GM12878 (cell line): ENCODE measurements at regions of chr2 and their contacts with region 1.

Region 1: GRCh38 chr2:13522917-13523821 is 806.4 kb downstream of the TRIB2 start:
- DNase-seq: peak; percentile 88
- ATAC-seq: peak; percentile 92
- H3K4me3 ChIP-seq: peak overlapping the region; percentile 45; the same call in 1 of the 2 replicates
- H3K27ac ChIP-seq: peak overlapping the region; percentile 97
- H3K4me1 ChIP-seq: peaks cover 11% of the 10 kb centered on the region; the same call in 1 of the 2 replicates
- H3K27me3 ChIP-seq: no peaks in the 10 kb centered on the region
- CTCF ChIP-seq: peak; percentile 29 to 36 (median 32); a peak in 5 of 6 replicates
- EP300 ChIP-seq: peak in 1 of 2 experiments; percentile 83; a peak in 2 of 4 replicates
- POLR2A ChIP-seq: no peak
- RAD21 ChIP-seq: peak; percentile 47; the same call in 1 of the 2 replicates

Region 2: DNA sequence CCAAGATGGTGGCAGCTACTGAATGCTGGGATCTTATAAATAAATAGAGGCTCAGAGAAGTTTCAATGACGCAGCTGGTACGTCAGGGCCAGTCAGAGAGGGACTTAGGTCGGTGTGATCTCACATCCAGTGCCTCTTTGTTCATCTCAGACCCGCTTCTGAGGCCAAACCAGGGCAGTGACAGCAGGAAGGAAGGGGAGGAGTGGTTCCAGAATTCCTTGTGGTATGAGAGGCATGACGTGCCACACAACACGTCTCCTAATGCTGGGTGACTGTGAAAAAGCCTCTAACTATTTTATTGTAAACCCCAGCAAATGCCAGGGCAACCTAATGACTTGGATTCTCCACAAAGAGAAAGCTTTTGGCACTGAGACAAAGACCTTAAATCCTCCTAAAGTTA is 1353.4 kb before region 1 on chr2:
- CTCF ChIA-PET with region 1: no interaction called
- POLR2A ChIA-PET with region 1: no interaction called
- RAD21 ChIA-PET with region 1: no interaction called
- SMC1A ChIA-PET with region 1: no interaction called
- in situ Hi-C with region 1: no loop called
- intact Hi-C with region 1: no loop called
- DNase-seq: no peak
- ATAC-seq: no peak
- H3K4me3 ChIP-seq: no peak overlapping the region
- H3K27ac ChIP-seq: no peak overlapping the region
- H3K4me1 ChIP-seq: no peaks in the 10 kb centered on the region
- H3K27me3 ChIP-seq: no peaks in the 10 kb centered on the region
- CTCF ChIP-seq: no peak
- EP300 ChIP-seq: no peak
- POLR2A ChIP-seq: no peak
- RAD21 ChIP-seq: no peak

Region 3: GRCh38 chr2:13193898-13194297 is 329.3 kb before region 1 on chr2:
- CTCF ChIA-PET with region 1: no interaction called
- POLR2A ChIA-PET with region 1: no interaction called
- RAD21 ChIA-PET with region 1: no interaction called
- SMC1A ChIA-PET with region 1: no interaction called
- in situ Hi-C with region 1: no loop called
- intact Hi-C with region 1: loop called (anchors 5 kb)
- DNase-seq: peak; percentile 31
- ATAC-seq: peak; percentile 92
- H3K4me3 ChIP-seq: no peak overlapping the region
- H3K27ac ChIP-seq: no peak overlapping the region
- H3K4me1 ChIP-seq: no peaks in the 10 kb centered on the region
- H3K27me3 ChIP-seq: no peaks in the 10 kb centered on the region
- CTCF ChIP-seq: peak; percentile 42 to 68 (median 56); a peak in 5 of 6 replicates
- EP300 ChIP-seq: no peak
- POLR2A ChIP-seq: no peak
- RAD21 ChIP-seq: peak; percentile 83

Region 4: GRCh38 chr2:13390676-13391075 is 132.5 kb before region 1 on chr2:
- CTCF ChIA-PET with region 1: no interaction called
- POLR2A ChIA-PET with region 1: no interaction called
- RAD21 ChIA-PET with region 1: no interaction called
- SMC1A ChIA-PET with region 1: no interaction called
- in situ Hi-C with region 1: no loop called
- intact Hi-C with region 1: no loop called
- DNase-seq: no peak
- ATAC-seq: no peak
- H3K4me3 ChIP-seq: no peak overlapping the region
- H3K27ac ChIP-seq: no peak overlapping the region
- H3K4me1 ChIP-seq: no peaks in the 10 kb centered on the region
- H3K27me3 ChIP-seq: no peaks in the 10 kb centered on the region
- CTCF ChIP-seq: no peak
- EP300 ChIP-seq: no peak
- POLR2A ChIP-seq: no peak
- RAD21 ChIP-seq: no peak

Region 5: DNA sequence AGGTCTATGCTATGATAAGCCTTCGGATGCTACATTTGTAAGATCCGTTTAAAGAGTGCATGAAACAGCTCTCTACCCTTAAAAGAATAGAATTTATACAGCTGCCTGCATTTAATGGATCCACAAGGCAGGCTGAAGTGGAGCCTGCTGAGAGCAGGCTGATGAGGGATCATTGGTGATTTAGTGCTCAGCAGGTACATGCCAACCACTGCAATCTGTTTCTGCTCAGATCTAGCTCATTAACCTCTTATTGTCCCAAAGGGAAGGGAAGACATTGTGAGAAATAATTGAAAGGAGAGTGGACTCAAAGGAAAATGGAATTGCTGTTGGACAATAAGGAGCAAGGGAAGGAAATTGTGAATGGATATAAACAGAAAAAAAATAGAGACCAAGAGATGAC is 16.1 kb after region 1 on chr2:
- CTCF ChIA-PET with region 1: no interaction called
- POLR2A ChIA-PET with region 1: no interaction called
- RAD21 ChIA-PET with region 1: interaction called, 4 read pairs
- SMC1A ChIA-PET with region 1: interaction called, 13 read pairs
- in situ Hi-C with region 1: no loop called
- intact Hi-C with region 1: no loop called
- DNase-seq: no peak
- ATAC-seq: no peak
- H3K4me3 ChIP-seq: no peak overlapping the region
- H3K27ac ChIP-seq: no peak overlapping the region
- H3K4me1 ChIP-seq: peaks cover 4% of the 10 kb centered on the region; the same call in 1 of the 2 replicates
- H3K27me3 ChIP-seq: no peaks in the 10 kb centered on the region
- CTCF ChIP-seq: no peak
- EP300 ChIP-seq: no peak
- POLR2A ChIP-seq: no peak
- RAD21 ChIP-seq: no peak

Region 6: DNA sequence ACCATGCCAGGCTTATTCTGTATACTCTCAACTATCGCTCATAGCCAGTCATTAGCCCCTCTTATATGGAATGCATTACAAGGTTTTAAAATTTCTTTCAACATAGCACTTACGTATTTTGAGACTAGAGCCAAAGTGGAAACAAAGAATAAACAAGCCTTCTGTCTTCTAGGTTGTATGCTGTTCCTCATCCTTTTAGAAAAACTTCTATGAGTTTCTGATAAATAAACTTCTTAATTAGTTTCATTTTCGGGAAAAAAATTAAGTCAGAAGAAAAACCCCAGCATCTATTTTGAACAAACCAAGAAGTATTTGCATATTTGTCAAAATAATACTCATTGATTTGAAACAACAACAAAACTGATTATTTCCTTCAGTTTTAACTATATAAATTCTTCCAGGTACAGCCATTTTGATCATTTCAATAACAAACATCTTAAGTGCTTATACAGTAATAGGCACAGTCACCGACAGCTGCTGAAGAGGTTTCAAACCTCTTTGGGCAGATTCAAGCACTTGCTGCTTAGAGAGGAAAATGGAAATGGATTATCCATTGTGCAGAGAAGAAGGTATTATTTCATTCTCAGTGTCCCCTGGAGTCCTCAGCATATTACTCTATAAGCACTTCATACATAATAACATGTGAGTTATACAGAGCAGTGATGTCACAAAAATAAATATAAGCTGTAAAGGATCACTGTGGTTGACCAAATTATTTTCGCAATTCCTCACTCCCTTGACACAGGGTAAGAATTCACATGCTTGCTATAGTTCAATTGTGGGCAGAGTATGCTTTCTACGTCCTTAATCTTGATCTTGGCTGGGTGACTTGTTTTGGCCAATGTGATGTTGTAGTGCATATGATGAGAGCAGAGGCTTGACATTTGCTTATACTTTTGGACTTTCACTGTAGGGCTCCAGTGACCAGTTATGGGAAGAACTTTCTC is 27.4 kb after region 1 on chr2:
- CTCF ChIA-PET with region 1: interaction called, 7 read pairs
- POLR2A ChIA-PET with region 1: interaction called, 5 read pairs
- RAD21 ChIA-PET with region 1: interaction called, 70 read pairs
- SMC1A ChIA-PET with region 1: interaction called, 46 read pairs
- in situ Hi-C with region 1: no loop called
- intact Hi-C with region 1: loop called (anchors 5 kb)
- DNase-seq: no peak
- ATAC-seq: peak; percentile 79
- H3K4me3 ChIP-seq: no peak overlapping the region
- H3K27ac ChIP-seq: no peak overlapping the region; the same call in 1 of the 2 replicates
- H3K4me1 ChIP-seq: 0 out of 2 replicates have a peak, but pooled peaks cover 4% of the 10 kb centered on the region
- H3K27me3 ChIP-seq: no peaks in the 10 kb centered on the region
- CTCF ChIP-seq: no peak
- EP300 ChIP-seq: peak; percentile 41 to 66; a peak in 3 of 4 replicates
- POLR2A ChIP-seq: no peak
- RAD21 ChIP-seq: no peak

Region 7: DNA sequence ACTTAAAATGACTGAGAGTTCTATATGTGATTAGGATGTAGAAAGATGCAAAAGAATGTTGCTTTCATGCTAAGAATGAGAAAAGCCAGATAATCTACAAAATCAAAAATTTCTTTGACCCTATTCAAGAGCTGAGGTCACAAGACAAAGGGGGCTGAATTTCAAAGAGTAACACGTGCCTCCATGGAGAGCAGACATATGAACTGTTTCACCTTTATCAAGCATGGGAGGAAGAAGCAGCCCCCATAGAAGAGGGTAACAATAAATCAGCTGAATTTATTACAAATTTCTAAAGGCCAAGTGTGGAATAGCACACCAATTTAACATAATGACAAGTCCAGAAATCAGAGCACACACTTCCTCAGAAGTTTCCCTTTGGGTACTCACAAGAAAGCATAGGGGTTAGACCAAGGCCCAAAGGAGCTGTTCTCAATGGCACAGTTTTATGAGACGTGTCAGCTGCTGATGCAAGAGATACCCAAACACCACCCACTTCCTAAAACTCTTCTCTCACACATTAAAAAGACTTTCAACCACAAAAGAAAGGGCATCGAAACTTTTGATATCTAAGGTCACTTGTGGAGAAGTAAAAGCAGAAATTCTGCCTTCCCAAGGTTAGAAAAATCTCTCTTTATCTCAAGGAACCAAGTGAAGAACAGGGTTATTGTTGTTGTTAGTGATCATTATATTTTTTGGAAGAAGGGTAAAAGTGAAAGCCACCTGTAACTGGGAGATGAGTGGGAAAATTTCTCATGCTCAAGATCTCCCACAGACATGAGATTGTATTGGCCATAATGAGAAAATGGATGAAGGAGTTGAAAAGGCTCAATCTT is 143.6 kb after region 1 on chr2:
- CTCF ChIA-PET with region 1: no interaction called
- POLR2A ChIA-PET with region 1: interaction called, 3 read pairs
- RAD21 ChIA-PET with region 1: interaction called, 11 read pairs
- SMC1A ChIA-PET with region 1: interaction called, 14 read pairs
- in situ Hi-C with region 1: no loop called
- intact Hi-C with region 1: no loop called
- DNase-seq: peak; percentile 76
- ATAC-seq: peak; percentile 98
- H3K4me3 ChIP-seq: no peak overlapping the region
- H3K27ac ChIP-seq: peak overlapping the region; percentile 79
- H3K4me1 ChIP-seq: peaks cover 5% of the 10 kb centered on the region; the same call in 1 of the 2 replicates
- H3K27me3 ChIP-seq: no peaks in the 10 kb centered on the region
- CTCF ChIP-seq: no peak
- EP300 ChIP-seq: peak; percentile 38 to 47; a peak in 2 of 4 replicates
- POLR2A ChIP-seq: no peak
- RAD21 ChIP-seq: no peak